ENCODE measurements at regions of chr4 and their contacts with region 1.

Region 1: DNA sequence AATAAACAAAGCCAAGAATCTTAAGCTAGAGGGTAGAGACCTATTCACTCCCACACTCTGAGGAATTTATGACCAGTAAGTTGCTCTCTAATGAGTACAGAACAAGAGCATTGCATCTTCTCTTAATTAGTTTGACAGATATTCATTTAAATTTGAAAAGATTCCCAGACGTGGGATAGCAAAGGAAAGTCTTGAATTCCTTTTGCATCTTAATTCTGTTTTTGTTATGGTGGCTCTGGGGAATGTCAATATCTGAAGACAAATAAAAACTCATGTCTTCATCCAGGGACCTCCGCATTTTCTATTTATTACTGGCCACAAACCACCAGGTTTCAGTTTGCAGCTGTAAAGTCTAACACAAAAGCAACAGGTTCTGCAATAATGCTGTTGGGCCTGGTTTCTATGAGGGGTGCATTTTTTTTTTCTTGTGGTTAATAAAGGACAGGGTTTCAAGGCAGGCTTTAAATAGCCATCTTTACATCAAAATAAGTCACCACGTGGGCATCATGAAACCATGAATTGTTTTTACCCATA is 172.3 kb downstream of the SHROOM3 start:
- DNase-seq: no peak
- H3K4me3 ChIP-seq: no peak overlapping the region
- H3K27ac ChIP-seq: no peak overlapping the region
- H3K4me1 ChIP-seq: peaks cover 12% of the 10 kb centered on the region
- H3K27me3 ChIP-seq: no peaks in the 10 kb centered on the region
- CTCF ChIP-seq: no peak
- EP300 ChIP-seq: no peak
- POLR2A ChIP-seq: no peak

Region 2: DNA sequence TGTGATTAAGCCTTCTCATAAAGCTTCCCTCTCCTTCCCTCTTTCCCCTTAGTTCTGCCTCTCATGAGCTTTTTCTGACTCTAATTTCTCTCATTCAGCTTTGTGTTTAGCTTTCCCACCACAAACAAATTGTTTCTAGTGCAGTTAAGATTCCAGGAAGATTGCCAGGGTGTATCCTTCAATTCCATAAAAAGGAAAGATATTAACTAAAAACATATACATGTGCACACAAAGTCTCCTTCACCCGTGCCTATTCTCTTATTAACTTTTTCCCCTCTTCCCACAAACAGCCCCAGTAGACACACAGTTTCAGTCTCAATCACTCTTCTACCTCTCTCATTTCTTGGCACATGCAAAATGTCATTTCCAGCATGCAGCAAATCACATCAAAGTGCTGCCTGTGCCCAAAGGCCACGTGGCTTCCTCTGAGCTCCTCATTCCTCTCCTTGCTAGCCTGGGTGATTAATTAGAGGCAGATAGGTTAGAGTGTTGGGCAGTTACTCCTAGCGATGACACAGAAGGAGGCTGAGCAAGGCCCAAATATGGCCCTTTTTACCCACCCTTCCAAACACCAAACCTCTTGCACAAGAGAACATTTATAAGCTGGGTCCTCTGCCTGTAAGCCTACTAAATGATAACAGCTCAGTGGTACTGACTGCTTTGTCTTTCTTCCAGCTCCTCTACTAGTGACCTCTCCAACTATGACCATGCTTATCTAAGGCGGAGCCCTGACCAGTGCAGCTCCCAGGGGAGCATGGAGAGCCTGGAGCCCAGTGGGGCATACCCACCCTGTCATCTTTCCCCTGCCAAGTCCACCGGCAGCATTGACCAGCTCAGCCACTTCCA is 131.0 kb after region 1 on chr4:
- intact Hi-C with region 1: loop called in 1 of 4 experiments (anchors 10 kb)
- DNase-seq: peak in 3 of 5 donors; percentile 34 to 41 (median 35)
- H3K4me3 ChIP-seq: no peak overlapping the region
- H3K27ac ChIP-seq: peak overlapping the region in 1 of 2 donors; percentile 29
- H3K4me1 ChIP-seq: peaks cover 5% of the 10 kb centered on the region
- H3K27me3 ChIP-seq: no peaks in the 10 kb centered on the region
- CTCF ChIP-seq: no peak
- EP300 ChIP-seq: peak; percentile 50
- POLR2A ChIP-seq: no peak

Region 3: GRCh38 chr4:76758290-76758882 is 151.1 kb after region 1 on chr4:
- intact Hi-C with region 1: loop called in 1 of 4 experiments (anchors 10 kb)
- DNase-seq: peak in 2 of 5 donors; percentile 42 to 43
- H3K4me3 ChIP-seq: no peak overlapping the region
- H3K27ac ChIP-seq: no peak overlapping the region
- H3K4me1 ChIP-seq: peaks cover 4% of the 10 kb centered on the region
- H3K27me3 ChIP-seq: no peaks in the 10 kb centered on the region
- CTCF ChIP-seq: peak; percentile 22 to 55 (median 39)
- EP300 ChIP-seq: no peak
- POLR2A ChIP-seq: no peak